ENCODE measurements at regions of chrX and their contacts with region 1.

Region 1: GRCh38 chrX:10119399-10119990 is 37.3 kb upstream of the CLCN4 start:
- DNase-seq: peak in 3 of 4 donors; percentile 64 to 80 (median 78)
- ATAC-seq: peak; percentile 98
- H3K4me3 ChIP-seq: no peak overlapping the region
- H3K27ac ChIP-seq: no peak overlapping the region
- H3K4me1 ChIP-seq: peaks cover 0 to 34% of the 10 kb centered on the region in 2 donors
- H3K27me3 ChIP-seq: no peaks in the 10 kb centered on the region
- CTCF ChIP-seq: peak; percentile 97 to 100

Region 2: GRCh38 chrX:9899640-9900111 is 219.8 kb before region 1 on chrX:
- intact Hi-C with region 1: loop called in 1 of 2 experiments (anchors 10 kb)
- DNase-seq: peak in 1 of 4 donors; percentile 57
- ATAC-seq: no peak
- H3K4me3 ChIP-seq: no peak overlapping the region
- H3K27ac ChIP-seq: no peak overlapping the region
- H3K4me1 ChIP-seq: no peaks in the 10 kb centered on the region
- H3K27me3 ChIP-seq: no peaks in the 10 kb centered on the region
- CTCF ChIP-seq: no peak

Region 3: GRCh38 chrX:9995855-9996339 is 123.6 kb before region 1 on chrX:
- intact Hi-C with region 1: loop called in 1 of 2 experiments (anchors 5 kb)
- DNase-seq: peak in 3 of 4 donors; percentile 71 to 93 (median 84)
- ATAC-seq: peak; percentile 99
- H3K4me3 ChIP-seq: no peak overlapping the region
- H3K27ac ChIP-seq: no peak overlapping the region
- H3K4me1 ChIP-seq: peaks cover 0 to 8% of the 10 kb centered on the region in 2 donors
- H3K27me3 ChIP-seq: no peaks in the 10 kb centered on the region
- CTCF ChIP-seq: peak; percentile 86 to 97